ENCODE measurements at regions of chr2 and their contacts with region 1.

Region 1: DNA sequence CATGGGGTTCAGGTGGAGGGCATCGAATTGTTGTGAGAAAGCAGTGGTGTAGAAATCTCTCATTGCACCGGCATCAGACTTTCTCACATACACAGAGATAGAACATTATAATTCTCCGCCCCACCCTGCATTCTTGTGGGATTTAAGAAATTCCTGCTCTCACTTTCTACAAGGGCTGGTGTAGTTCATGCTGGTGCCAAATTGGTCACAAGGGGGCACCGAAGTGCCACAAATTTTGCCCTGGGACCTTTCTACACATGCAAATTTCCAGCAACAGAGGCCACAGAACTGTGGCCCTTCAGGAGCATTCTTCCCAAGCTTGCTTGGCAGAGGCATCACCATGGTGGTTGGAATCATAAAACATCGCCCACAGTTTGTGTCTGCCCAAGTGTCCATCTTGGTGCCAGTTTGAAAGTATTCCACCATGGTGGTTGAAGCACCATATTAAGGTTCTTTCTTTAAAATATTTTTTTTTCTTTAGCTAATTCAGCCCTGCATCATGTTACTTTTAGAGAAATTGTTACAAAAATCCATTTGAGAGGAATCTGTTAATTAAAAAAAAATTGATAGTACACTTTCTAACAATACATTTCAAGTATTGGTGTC is 521.2 kb upstream of the FANCL start:
- DNase-seq: peak; percentile 41
- ATAC-seq: peak; percentile 97
- H3K4me3 ChIP-seq: no peak overlapping the region
- H3K27ac ChIP-seq: no peak overlapping the region
- H3K4me1 ChIP-seq: no peaks in the 10 kb centered on the region
- H3K27me3 ChIP-seq: peaks cover 32% of the 10 kb centered on the region
- CTCF ChIP-seq: peak; percentile 44 to 78 (median 74); a peak in 5 of 6 replicates
- POLR2A ChIP-seq: no peak
- RAD21 ChIP-seq: peak; percentile 75

Region 2: GRCh38 chr2:58749041-58749440 is 13.2 kb before region 1 on chr2:
- CTCF ChIA-PET with region 1: no interaction called
- POLR2A ChIA-PET with region 1: no interaction called
- RAD21 ChIA-PET with region 1: no interaction called
- intact Hi-C with region 1: no loop called
- DNase-seq: no peak
- ATAC-seq: no peak
- H3K4me3 ChIP-seq: no peak overlapping the region
- H3K27ac ChIP-seq: no peak overlapping the region
- H3K4me1 ChIP-seq: no peaks in the 10 kb centered on the region
- H3K27me3 ChIP-seq: no peaks in the 10 kb centered on the region
- CTCF ChIP-seq: no peak
- POLR2A ChIP-seq: no peak
- RAD21 ChIP-seq: no peak

Region 3: DNA sequence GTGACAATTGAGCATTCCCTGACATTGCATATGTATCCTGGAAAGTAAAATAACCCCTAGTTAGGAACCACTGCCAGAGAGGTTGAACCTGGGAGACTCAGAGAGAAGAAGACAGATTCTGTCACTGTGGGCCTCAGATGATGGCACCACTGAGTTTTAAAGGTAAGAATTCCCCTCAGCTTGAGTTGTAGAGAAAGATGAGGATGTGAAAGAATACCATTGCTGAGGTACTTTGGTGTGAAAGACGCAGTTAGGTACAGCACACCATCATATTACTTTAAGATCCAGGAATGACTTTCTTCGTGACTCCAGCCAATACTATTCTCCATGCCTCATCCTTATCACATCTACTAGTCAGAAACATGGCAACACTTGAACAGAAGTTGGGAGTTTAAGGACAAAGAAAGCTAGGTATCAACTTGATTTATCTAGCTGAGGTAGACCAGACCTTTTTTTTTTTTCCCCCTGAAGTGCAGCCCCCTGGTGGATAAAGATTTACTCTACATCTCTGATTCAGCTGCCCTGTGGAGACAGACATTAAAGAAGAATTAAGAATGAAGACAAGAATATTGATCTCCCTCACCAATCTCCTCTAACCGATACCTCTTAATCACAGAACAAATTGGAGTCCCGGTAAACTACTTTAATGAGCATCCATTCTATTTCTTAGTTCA is 109.3 kb after region 1 on chr2:
- CTCF ChIA-PET with region 1: interaction called, 4 read pairs
- POLR2A ChIA-PET with region 1: no interaction called
- RAD21 ChIA-PET with region 1: no interaction called
- intact Hi-C with region 1: loop called (anchors 1 kb)
- DNase-seq: no peak
- ATAC-seq: peak; percentile 54; the same call in 1 of the 2 replicates
- H3K4me3 ChIP-seq: no peak overlapping the region
- H3K27ac ChIP-seq: no peak overlapping the region
- H3K4me1 ChIP-seq: no peaks in the 10 kb centered on the region
- H3K27me3 ChIP-seq: peaks cover 2% of the 10 kb centered on the region; the same call in 1 of the 2 replicates
- CTCF ChIP-seq: peak in 2 of 3 experiments; percentile 27 to 54; a peak in 4 of 6 replicates
- POLR2A ChIP-seq: no peak
- RAD21 ChIP-seq: peak; percentile 15; the same call in 1 of the 2 replicates

Measured in HCT116 (cell line).